ENCODE measurements at regions of chr4 and their contacts with region 1.

Region 1: DNA sequence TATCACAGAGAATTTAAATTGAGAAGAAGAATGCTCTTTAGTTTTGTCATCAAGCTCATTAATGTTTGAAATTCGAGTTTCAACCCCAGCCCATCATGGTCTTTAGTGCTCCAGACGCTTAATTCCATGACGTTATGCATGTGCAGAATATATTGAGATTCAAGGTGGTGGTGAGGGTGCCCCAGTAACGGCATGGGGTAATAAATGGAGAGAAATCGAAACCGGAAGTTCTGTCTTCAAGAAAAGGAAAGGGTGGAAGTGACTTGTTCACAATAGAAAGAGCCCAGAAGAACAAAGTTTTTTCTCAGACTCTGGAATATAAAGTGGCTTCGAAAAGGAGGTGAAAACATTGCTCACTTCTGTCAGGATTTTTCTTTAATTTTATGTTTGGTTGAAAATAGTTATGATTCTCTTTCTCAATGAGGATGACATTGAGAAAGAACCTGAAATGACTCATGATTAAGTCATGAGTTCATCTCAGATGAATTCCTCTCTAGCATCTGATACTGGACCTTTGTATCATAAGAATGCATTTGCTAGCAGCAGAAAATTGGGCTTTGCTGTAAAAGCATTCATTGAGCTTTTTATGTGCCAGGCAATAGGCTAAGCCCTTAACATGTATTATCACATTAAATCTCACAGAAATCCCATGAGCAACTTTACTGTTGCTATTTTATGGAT is 779 bp upstream of the DDX60L start:
- DNase-seq: no peak
- ATAC-seq: peak; percentile 68 to 79 (median 72)
- H3K4me3 ChIP-seq: peak overlapping the region; percentile 91
- H3K27ac ChIP-seq: peak overlapping the region; percentile 94
- H3K4me1 ChIP-seq: peaks cover 25% of the 10 kb centered on the region
- H3K27me3 ChIP-seq: no peaks in the 10 kb centered on the region
- CTCF ChIP-seq: no peak

Region 2: DNA sequence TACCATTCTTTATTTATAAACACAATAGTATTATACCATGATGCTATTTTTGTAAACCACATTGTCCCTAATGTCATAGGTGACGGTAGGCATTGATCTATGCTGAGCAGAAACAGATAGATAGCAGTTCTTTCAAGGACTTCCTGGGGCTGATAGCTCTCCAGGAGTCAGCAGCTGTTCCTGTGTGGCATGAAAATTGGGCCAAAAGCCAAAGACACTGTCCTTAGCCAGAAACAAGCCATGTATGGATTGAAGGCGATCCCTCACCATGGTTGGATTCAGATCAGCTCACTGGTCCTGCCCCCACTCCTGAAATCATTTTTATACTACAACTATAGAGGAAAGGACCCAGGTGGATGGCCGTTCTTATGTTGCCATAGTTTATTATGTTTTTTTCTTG is 216.2 kb before region 1 on chr4:
- intact Hi-C with region 1: loop called in 1 of 2 experiments (anchors 5 kb)
- DNase-seq: no peak
- ATAC-seq: peak; percentile 82 to 91 (median 87)
- H3K4me3 ChIP-seq: no peak overlapping the region
- H3K27ac ChIP-seq: peak overlapping the region; percentile 38
- H3K4me1 ChIP-seq: peaks cover 26% of the 10 kb centered on the region
- H3K27me3 ChIP-seq: no peaks in the 10 kb centered on the region
- CTCF ChIP-seq: no peak

Region 3: GRCh38 chr4:168318266-168318895 is 162.7 kb before region 1 on chr4 and contains the start of gene DDX60:
- intact Hi-C with region 1: loop called in 1 of 2 experiments (anchors 5 kb)
- DNase-seq: peak; percentile 68 to 76
- ATAC-seq: peak; percentile 82 to 95 (median 92)
- H3K4me3 ChIP-seq: peak within 1 kb of the TSS; percentile 98
- H3K27ac ChIP-seq: peak within 1 kb of the TSS; percentile 88
- H3K4me1 ChIP-seq: peaks cover 6% of the 10 kb centered on the region
- H3K27me3 ChIP-seq: no peaks in the 10 kb centered on the region
- CTCF ChIP-seq: peak; percentile 51
- total RNA-seq, gene DDX60: 1.4 to 3.6 (median 2.7) TPM